ENCODE measurements at regions of chr1 and their contacts with region 1.

Region 1: GRCh38 chr1:151606395-151606794 is 5.5 kb upstream of the SNX27 start:
- DNase-seq: no peak
- H3K4me3 ChIP-seq: no peak overlapping the region
- H3K27ac ChIP-seq: no peak overlapping the region
- H3K4me1 ChIP-seq: peaks cover 0 to 20% (median 14%) of the 10 kb centered on the region in 4 donors
- H3K27me3 ChIP-seq: no peaks in the 10 kb centered on the region
- CTCF ChIP-seq: no peak
- EP300 ChIP-seq: no peak
- POLR2A ChIP-seq: no peak

Region 2: DNA sequence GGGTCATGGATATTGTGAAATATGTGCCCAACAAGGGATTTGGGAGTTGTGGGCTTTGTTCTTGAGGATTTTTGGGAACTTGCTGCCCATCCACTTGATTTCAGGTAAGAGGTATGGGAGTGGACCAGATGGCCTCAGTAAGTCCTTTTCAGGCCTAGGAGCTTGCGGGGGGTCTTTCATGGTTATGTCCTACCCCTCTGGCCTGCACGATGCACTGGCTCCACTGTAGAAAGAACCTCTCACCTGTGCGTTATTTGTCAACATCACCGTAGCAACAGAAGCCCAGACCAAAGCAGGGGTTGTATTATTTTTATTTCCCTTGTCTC is 123.5 kb after region 1 on chr1:
- intact Hi-C with region 1: loop called (anchors 5 kb)
- DNase-seq: no peak
- H3K4me3 ChIP-seq: no peak overlapping the region
- H3K27ac ChIP-seq: no peak overlapping the region
- H3K4me1 ChIP-seq: peaks cover 8 to 25% (median 17%) of the 10 kb centered on the region in 4 donors
- H3K27me3 ChIP-seq: no peaks in the 10 kb centered on the region
- CTCF ChIP-seq: no peak
- EP300 ChIP-seq: no peak
- POLR2A ChIP-seq: no peak